Left cardiac atrium (tissue), 4 donors: ENCODE measurements at regions of chr22 and their contacts with region 1.

Region 1: DNA sequence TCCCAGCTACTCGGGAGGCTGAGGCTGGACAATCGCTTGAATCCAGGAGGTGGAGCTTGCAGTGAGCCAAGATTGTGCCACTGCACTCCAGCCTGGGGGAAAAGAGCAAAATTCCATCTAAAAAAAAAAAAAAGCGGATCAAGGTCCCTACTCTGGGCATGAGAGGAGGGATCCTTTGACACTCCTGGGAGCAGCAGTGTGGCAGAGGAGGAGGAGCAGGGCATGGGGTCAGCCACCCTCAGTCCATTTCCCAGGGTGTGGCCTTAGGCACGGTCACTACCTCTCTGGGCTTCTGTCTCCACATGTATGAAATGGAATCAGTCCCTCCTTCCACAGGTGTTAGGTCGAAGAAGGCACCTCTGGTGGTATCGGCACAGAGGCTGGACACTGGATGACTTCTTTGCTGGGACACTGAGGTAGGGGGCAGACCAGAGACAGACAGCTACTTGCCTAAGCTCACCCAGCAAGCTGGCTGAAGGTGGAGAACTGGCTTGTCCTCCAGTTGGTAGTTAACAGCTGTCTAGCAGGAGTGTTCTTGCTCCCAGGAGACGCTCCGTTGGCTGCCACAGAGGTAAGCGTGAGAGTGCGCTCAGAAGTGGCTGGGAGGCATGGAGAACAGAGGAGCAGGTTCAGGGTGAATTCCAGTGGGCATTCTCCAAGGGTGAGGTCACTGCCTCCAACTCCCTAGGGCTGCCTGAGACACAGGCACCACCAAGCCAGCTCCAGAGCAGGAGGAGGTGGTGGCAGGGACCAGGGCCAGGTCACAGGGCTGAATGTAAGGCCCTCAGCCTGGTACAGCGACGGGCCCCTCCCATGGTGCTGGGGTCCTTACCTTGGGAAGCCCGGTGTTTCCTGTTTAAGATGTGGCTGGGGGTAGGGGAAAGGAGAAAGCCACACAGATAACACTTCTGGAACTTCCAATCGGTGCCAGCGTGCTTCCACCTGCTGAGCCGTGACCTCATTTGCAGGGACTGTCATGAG is 19.5 kb downstream of the TXN2 start:
- DNase-seq: no peak
- ATAC-seq: peak; percentile 4 to 39

Region 2: DNA sequence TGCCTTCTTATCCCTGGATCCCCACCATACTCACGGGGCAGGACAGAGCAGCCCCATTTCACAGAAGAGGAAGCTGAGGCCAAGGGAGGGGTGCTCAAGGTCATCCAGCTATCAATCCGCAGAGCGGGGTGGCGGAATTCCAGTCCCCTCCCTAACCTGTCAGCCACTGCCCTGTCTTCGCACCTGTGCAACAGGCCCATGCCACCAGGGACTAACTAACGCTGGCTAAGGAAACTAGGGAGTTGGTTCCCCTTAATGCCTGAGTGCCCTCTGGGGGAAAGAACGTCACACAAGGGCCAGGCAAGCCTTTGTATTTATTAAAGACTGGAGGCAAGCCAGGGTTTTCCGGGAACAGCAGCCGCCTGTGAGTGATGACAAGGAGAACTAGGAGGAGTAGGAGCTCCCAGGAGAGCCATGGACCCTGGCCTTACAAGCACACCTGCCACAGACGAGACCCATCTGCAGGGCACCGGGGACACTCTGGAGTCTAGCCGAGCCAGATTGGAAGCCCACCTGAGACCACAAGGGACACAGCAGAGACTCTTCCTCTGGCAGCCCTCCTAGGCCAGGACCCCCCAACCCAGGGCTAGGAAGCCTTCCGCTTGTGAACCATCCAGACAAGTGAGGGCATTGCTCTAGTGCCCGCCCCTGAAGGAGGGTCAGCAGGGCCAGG is 138.6 kb before region 1 on chr22:
- intact Hi-C with region 1: loop called (anchors 5 to 10 kb)
- DNase-seq: peak; percentile 83
- ATAC-seq: peak; percentile 28 to 66

Region 3: DNA sequence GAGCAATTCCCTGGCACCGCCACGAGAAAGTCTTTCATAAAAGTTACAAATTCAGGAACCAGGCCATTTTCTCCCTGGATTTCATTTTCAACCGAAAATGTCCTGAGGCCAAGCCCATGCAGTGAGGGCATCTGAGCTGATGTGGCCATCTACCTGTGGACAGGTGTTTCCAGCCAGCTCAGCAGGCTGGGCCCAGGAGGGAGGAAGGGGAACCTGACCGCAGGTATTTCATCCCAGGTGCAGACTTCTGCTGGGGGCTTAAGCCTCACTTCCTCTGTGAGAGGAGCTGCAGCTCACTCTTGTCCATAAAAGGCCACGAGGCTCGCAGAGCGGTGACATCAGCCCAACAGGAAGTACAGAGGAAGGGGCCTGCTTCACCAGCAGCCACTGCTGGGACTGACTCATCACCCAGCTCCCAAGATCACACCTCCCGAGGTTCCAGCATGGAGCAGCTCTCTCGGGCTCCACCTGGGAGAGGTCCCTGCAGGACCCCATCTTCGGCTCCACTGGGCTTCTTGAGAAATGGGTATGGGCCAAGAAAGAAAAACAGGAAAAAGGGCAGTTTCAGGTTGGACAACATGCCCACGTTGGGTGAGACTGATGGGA is 130.6 kb before region 1 on chr22:
- intact Hi-C with region 1: loop called in 1 of 2 experiments (anchors 10 kb)
- DNase-seq: peak; percentile 88
- ATAC-seq: peak; percentile 45 to 67

Region 4: GRCh38 chr22:36387752-36388518 is 74.0 kb before region 1 on chr22 and contains the start of gene MYH9:
- intact Hi-C with region 1: loop called (anchors 5 to 10 kb)
- DNase-seq: peak; percentile 100
- ATAC-seq: peak; percentile 94
- total RNA-seq, gene MYH9: 225 to 367 TPM

Region 5: DNA sequence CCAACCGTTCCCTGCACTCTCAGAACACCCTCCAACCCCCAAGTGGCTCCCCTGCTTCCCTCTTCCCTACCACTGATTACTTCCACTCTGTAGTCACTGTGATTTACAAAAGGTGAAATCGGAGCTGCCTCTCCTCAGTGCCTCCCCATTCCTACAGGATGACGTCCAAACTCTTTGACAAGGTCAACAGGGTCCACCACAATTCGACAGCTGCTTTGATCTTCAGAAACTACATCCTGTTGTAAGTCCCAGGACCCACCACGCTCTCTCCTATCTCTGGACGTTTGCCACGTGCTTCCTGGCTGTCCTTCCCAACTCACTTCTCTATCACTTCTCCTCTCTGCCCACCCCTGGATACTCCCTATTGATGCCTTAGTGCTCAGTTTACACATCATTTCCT is 152.0 kb after region 1 on chr22:
- intact Hi-C with region 1: no loop called
- DNase-seq: no peak
- ATAC-seq: no peak